CD4-positive, alpha-beta memory T cell (primary cell): ENCODE measurements at regions of chr6 and their contacts with region 1.

Region 1: DNA sequence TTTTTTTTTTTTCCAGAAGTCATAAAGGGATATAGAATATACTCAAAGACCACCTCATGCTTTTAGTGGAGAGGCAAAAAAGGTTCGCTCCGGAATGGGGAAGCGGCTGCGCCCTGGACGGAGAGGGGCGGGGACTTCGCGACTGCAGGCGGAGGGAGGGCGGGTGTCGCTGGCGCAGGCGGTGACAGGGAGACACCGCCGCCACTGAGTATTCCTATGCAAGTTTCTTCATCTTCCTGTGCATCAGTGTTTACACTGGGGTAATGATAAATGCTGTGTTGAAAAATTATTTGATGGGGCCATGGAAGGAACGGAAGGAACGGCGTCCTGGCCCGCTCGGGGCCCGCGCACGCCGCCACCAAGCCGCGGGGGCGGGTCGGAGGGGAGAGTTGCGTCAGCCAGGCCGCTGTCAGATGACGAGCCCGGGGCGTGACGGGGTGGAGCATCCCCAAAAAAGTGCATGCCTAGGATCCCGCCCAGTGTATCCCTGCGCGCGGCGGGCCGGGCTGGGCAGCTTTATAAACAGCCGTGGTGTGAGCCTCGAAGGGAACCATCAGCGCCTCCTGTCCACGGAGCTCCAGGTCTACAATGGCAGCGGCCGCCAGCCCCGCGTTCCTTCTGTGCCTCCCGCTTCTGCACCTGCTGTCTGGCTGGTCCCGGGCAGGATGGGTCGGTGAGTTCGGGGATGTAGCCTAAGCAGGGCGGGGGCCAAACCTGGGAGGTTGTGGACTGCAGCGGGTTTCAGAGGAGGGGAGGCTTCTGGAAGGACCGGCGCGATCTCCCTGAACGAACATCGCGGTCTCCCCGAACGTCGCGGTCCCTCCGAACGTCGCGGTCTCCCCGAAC is at the start of gene ULBP1:
- DNase-seq: peak; percentile 64 to 74 (median 72)
- H3K4me3 ChIP-seq: peak within 1 kb of the TSS; percentile 39 to 65
- H3K4me3 Mint-ChIP-seq: peak within 1 kb of the TSS; percentile 88 to 98 (median 93)
- H3K27ac ChIP-seq: no peak within 1 kb of the TSS
- H3K27ac Mint-ChIP-seq: peak within 1 kb of the TSS; percentile 78 to 92 (median 82)
- H3K4me1 ChIP-seq: peaks cover 30% of the 10 kb centered on the region
- H3K4me1 Mint-ChIP-seq: peaks cover 14 to 36% (median 23%) of the 10 kb centered on the region in 4 donors
- H3K27me3 ChIP-seq: peaks cover 44% of the 10 kb centered on the region
- H3K27me3 Mint-ChIP-seq: peaks cover 47 to 86% of the 10 kb centered on the region in 2 donors
- total RNA-seq, gene ULBP1: not detected

Region 2: DNA sequence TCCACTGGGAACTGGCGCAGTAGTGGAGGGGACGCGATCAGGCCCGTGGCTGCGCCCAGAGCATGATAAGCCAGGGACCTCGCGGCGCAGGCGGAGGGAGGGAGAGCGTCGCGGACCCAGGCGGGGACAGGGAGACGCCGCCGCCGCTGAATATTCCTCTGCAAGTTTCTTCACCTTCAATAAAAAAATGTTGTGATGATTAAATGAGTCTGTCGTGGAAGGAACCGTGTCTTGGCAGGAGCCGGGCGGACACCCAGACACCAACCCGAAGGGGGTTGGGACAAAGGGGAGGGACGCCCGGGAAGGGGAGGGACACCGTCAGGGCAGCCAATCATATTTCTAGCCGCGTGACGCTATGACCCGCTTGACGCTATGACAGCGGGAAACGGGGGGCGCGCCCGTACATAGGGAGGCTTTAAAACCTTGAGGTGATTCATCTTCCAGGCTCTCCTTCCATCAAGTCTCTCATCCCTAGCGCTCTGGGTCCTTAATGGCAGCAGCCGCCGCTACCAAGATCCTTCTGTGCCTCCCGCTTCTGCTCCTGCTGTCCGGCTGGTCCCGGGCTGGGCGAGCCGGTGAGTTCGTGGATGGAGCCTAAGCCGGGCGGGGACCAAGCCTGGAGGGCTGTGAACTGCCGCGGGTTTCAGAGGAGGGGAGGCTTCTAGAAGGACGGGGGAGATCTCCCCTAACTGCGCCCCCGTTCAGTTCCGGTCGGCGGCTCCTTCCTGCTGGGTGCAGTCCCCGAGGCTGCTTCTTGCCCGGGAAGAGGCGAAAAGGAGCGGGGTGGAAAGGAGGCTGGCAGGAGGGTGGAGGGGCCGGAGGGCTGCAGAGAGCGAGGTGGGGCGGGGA is 21.9 kb before region 1 on chr6 and contains the start of gene ULBP2:
- CTCF ChIA-PET with region 1: no interaction called
- POLR2A ChIA-PET with region 1: no interaction called
- intact Hi-C with region 1: loop called (anchors 1 kb)
- DNase-seq: peak; percentile 86 to 97 (median 88)
- H3K4me3 ChIP-seq: peak within 1 kb of the TSS; percentile 57 to 76
- H3K4me3 Mint-ChIP-seq: peak within 1 kb of the TSS; percentile 93 to 96 (median 95)
- H3K27ac ChIP-seq: peak within 1 kb of the TSS; percentile 18
- H3K27ac Mint-ChIP-seq: peak within 1 kb of the TSS; percentile 93 to 96 (median 94)
- H3K4me1 ChIP-seq: peaks cover 25% of the 10 kb centered on the region
- H3K4me1 Mint-ChIP-seq: peaks cover 13 to 50% (median 29%) of the 10 kb centered on the region in 4 donors
- H3K27me3 ChIP-seq: peaks cover 35% of the 10 kb centered on the region
- H3K27me3 Mint-ChIP-seq: peaks cover 38% of the 10 kb centered on the region in 2 donors
- total RNA-seq, gene ULBP2: not detected

Region 3: GRCh38 chr6:149990618-149991471 is 27.2 kb after region 1 on chr6:
- CTCF ChIA-PET with region 1: no interaction called
- POLR2A ChIA-PET with region 1: interaction called, 4 read pairs
- intact Hi-C with region 1: loop called (anchors 2 kb)
- DNase-seq: peak in 4 of 5 donors; percentile 33 to 53 (median 42)
- H3K4me3 ChIP-seq: peak overlapping the region; percentile 38 to 40
- H3K4me3 Mint-ChIP-seq: peak overlapping the region; percentile 63 to 93 (median 80)
- H3K27ac ChIP-seq: no peak overlapping the region
- H3K27ac Mint-ChIP-seq: peak overlapping the region in 4 of 7 donors; percentile 18 to 58 (median 34)
- H3K4me1 ChIP-seq: peaks cover 28% of the 10 kb centered on the region
- H3K4me1 Mint-ChIP-seq: peaks cover 22 to 42% (median 29%) of the 10 kb centered on the region in 4 donors
- H3K27me3 ChIP-seq: peaks cover 75% of the 10 kb centered on the region
- H3K27me3 Mint-ChIP-seq: peaks cover 69 to 78% of the 10 kb centered on the region in 2 donors